Activated T-helper 1 cell treated with anti-CD3 and anti-CD28 coated beads, Interleukin-12 subunit alpha, Interleukin-12 subunit beta, Interleukin-2, Interleukin-4 antibody, amounts not matched to agents 30 ng/mL and 10 ng/mL and 1 ng/mL, durations not matched to agents 14 hours and 24 hours and 36 hours (primary cell): ENCODE measurements at regions of chr2 and their contacts with region 1.

Region 1: DNA sequence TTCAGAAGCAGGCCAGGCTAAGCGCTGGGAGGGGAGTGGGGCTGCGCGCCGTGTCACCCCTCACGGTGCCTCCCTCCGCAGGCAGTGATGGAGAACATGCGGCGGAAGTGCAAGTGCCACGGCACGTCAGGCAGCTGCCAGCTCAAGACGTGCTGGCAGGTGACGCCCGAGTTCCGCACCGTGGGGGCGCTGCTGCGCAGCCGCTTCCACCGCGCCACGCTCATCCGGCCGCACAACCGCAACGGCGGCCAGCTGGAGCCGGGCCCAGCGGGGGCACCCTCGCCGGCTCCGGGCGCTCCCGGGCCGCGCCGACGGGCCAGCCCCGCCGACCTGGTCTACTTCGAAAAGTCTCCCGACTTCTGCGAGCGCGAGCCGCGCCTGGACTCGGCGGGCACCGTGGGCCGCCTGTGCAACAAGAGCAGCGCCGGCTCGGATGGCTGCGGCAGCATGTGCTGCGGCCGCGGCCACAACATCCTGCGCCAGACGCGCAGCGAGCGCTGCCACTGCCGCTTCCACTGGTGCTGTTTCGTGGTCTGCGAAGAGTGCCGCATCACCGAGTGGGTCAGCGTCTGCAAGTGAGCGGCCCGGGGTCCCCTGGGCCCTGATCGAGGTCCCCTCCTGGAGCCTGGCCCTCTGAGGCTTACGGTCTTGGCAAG is 12.2 kb downstream of the WNT10A start:
- DNase-seq: peak; percentile 72
- H3K4me3 Mint-ChIP-seq: peak overlapping the region; percentile 15
- H3K27ac Mint-ChIP-seq: peak overlapping the region; percentile 81
- H3K4me1 Mint-ChIP-seq: peaks cover 35% of the 10 kb centered on the region
- H3K27me3 Mint-ChIP-seq: peaks cover 59% of the 10 kb centered on the region

Region 2: GRCh38 chr2:218286570-218287459 is 606.0 kb before region 1 on chr2:
- intact Hi-C with region 1: loop called (anchors 10 kb)
- DNase-seq: peak; percentile 82
- H3K4me3 Mint-ChIP-seq: peak overlapping the region; percentile 94
- H3K27ac Mint-ChIP-seq: peak overlapping the region; percentile 99
- H3K4me1 Mint-ChIP-seq: peaks cover 72% of the 10 kb centered on the region
- H3K27me3 Mint-ChIP-seq: no peaks in the 10 kb centered on the region

Region 3: GRCh38 chr2:218927422-218927821 is 34.6 kb after region 1 on chr2:
- intact Hi-C with region 1: no loop called
- DNase-seq: no peak
- H3K4me3 Mint-ChIP-seq: no peak overlapping the region
- H3K27ac Mint-ChIP-seq: no peak overlapping the region
- H3K4me1 Mint-ChIP-seq: no peaks in the 10 kb centered on the region
- H3K27me3 Mint-ChIP-seq: peaks cover 10% of the 10 kb centered on the region